ENCODE measurements at regions of chr5 and their contacts with region 1.

Region 1: DNA sequence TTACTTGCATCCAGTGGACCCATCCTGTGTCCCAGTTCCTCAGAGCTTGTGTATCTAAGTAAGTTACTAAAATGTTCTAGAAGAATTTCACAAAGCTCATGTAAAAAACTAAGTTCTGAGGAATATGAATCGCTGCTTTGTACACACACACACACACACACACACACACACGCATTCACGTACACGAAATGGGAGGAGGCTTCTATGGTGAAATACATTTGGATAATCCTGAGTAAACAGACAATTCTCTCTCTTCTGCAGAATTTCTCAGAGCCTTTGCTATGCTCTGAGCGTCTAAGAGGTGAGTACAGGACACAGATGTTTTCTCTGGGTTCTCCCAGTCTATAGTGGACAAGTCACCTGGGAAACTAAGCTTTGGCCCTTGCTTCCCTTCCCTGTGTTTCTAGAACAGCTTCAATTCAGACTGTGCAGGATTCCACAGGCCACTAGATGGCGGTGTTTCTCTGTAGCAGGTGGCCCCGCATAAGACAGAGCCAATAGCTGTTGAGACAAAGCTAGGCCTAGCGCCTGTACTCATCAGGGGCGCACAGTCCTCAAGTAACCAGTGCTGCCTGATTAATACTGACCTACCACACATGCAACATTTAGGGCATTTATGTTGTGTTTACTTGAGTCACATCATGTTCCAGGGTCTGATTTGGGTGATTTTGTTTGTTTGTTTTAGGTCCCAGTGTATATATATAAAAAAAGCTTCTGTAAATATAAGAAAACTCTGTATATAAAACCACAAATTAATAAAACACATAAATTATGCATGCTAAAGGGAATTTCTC is 114.8 kb downstream of the LIFR start:
- DNase-seq: peak; percentile 89
- ATAC-seq: peak; percentile 99
- H3K4me3 Mint-ChIP-seq: no peak overlapping the region
- H3K27ac Mint-ChIP-seq: no peak overlapping the region
- H3K4me1 Mint-ChIP-seq: peaks cover 1% of the 10 kb centered on the region
- H3K27me3 Mint-ChIP-seq: peaks cover 47% of the 10 kb centered on the region

Region 2: GRCh38 chr5:38338455-38338854 is 103.2 kb before region 1 on chr5:
- CTCF ChIA-PET with region 1: no interaction called
- DNase-seq: no peak
- ATAC-seq: no peak
- H3K4me3 Mint-ChIP-seq: no peak overlapping the region
- H3K27ac Mint-ChIP-seq: no peak overlapping the region
- H3K4me1 Mint-ChIP-seq: no peaks in the 10 kb centered on the region
- H3K27me3 Mint-ChIP-seq: peaks cover 11% of the 10 kb centered on the region

Region 3: DNA sequence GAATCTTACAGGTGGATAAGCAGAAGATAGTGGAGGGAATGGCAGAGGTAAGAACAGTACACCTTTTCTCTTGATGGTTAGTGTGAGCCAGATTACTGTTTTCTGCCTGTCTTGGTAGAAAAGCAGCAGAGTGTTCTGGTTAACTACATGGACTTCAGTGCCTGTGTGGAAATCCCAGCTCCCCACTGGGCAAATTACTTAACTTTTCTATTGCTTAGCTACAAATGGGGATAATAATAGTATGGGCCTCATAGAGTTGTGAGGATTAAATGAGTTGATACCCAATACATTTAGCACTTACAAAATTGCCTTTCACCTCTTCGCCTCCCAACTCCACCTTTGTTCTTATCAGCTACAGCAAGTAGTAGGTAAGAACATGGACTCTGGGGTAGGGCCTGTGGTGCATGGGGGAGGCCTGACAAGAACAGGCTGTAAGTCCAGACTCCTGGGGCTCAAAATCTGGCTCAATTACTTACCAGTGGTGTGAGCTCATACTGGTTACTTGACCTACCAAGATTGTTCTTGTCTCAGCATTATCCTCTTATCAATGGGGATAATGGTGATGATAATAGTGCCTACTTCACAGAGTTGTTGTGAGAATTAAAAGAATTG is 10.3 kb before region 1 on chr5:
- CTCF ChIA-PET with region 1: interaction called, 11 read pairs
- DNase-seq: no peak
- ATAC-seq: no peak
- H3K4me3 Mint-ChIP-seq: no peak overlapping the region
- H3K27ac Mint-ChIP-seq: no peak overlapping the region
- H3K4me1 Mint-ChIP-seq: peaks cover 20% of the 10 kb centered on the region
- H3K27me3 Mint-ChIP-seq: peaks cover 39% of the 10 kb centered on the region

Region 4: DNA sequence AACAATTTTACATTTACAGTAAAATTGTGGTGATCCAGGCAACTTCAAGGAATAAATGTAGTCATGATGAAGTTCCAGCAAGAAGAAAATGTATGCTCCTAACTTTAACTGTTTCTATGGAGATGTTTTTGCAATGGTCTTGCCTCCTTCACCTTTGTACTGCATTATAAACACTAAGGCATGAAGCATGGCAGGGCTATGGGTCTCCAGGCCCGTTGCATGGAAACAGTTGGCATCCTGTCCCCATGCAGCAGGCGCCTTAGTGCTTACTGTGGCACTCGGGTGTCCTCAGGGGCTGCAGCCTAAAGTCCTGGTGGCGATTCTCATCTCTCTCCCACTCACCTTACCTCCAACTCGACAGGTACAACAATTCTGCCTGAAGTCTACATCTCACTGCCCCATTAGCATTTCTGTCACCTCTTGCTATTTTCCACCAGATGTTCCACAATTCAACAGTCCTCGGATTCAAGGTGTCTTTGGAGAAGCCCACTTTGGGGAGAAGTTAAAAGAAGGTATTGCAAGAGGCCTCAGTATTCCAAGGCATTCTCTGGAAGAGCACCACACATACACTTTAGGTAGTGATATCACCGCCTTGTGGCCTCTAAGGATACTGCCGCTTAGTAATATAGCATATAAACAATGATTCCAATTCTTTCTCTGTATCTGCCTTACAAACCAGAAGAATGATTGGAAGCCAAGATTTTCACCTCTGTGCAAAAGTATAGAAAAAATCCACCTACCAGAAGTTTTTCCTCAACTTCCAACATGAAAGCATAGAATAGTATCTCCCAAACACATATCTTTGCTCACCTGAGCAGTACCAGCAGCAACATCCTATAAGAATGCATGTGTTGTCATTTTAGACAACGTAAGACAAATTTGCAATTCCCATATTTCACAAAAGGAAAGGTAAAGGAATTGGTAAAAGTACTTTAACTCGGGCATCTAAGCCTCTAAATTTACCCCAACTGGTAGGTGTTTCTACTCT is 109.7 kb after region 1 on chr5:
- CTCF ChIA-PET with region 1: interaction called, 18 read pairs
- DNase-seq: no peak
- ATAC-seq: no peak
- H3K4me3 Mint-ChIP-seq: no peak overlapping the region
- H3K27ac Mint-ChIP-seq: no peak overlapping the region
- H3K4me1 Mint-ChIP-seq: peaks cover 9% of the 10 kb centered on the region
- H3K27me3 Mint-ChIP-seq: peaks cover 67% of the 10 kb centered on the region

Region 5: DNA sequence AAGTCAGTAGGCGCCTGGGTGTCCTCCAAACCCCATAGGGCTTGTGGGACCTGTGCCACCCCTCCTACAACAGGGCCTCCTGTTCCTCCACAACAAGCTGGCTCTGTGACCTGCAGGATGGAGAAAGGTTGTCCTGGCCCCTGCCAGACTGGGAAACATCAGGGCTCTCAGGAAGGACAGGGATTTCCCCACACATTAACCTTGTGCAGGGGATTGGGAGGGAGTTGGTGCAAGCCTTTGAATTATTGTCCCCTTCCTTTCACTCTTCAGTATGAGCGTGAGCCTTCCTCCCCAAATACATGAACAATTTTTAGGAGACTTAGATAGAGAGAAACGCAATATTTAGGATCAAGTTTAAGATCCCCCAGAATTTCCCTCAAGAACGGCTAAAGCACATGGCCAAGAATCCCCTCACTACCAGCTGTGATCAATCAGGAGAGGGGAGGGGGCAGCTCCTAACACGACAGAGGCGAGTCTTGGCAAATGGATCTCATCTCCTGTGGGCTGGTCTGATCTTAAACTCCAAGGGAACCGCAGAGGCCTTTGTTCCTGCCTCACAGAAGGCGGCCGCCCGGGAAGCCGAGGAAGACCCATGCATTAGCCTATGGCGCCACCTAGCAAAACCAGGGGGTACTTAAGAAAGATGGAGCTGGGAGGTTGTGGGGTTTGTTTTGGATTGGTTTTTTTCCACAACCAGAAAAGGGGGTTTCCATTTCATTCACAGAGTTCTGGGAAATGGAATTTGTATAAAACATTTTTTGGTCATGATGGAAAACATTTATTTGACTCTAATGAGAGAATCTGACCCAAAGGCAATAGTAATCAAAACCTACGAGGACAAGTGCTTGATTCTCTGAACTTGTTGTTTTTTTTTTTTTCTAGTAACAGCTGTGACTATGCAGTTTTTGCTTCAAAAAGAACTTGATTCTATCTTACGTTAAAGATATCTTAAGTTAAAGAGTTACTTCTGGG is 368.0 kb after region 1 on chr5:
- CTCF ChIA-PET with region 1: interaction called, 84 read pairs
- DNase-seq: peak; percentile 66
- ATAC-seq: peak; percentile 63
- H3K4me3 Mint-ChIP-seq: no peak overlapping the region
- H3K27ac Mint-ChIP-seq: no peak overlapping the region
- H3K4me1 Mint-ChIP-seq: peaks cover 3% of the 10 kb centered on the region
- H3K27me3 Mint-ChIP-seq: peaks cover 32% of the 10 kb centered on the region

Region 6: DNA sequence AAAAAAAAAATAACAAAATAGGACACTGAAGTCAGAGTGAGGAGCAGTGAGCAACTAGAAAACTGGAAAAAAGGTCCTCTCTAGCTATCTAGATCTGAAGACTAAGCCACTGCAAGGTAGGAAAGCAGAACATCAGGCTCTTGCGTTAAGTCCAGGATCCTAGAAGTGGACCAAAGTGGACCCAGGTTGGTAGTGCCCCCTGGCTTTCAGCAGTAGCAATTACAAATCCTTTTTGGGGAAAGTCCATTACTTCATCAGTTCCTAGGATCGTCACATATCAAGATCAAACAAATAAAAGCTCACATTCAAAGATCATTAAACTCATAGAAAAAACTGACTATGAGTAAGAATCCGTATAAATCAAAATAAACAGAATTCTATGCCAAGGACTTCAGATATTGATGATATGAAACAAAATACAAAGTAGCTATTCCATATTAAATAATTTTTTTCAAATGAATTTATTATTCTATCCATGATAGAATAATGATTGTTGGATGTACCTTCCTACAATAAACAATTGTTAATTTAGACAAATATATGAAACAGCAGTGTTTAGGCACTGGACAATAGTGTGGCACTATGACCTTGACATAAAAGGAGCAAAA is 639.1 kb after region 1 on chr5:
- CTCF ChIA-PET with region 1: interaction called, 12 read pairs
- DNase-seq: peak; percentile 56
- ATAC-seq: peak; percentile 46
- H3K4me3 Mint-ChIP-seq: no peak overlapping the region
- H3K27ac Mint-ChIP-seq: no peak overlapping the region
- H3K4me1 Mint-ChIP-seq: peaks cover 21% of the 10 kb centered on the region
- H3K27me3 Mint-ChIP-seq: peaks cover 24% of the 10 kb centered on the region